Heart right ventricle (tissue), 16 donors: ENCODE measurements at regions of chr14 and their contacts with region 1.

Region 1: GRCh38 chr14:99793213-99794150 is at the start of gene EML1:
- DNase-seq: peak; percentile 83 to 88
- ATAC-seq: peak; percentile 77 to 93 (median 89)
- H3K4me3 ChIP-seq: peak within 1 kb of the TSS in 9 of 10 donors; percentile 41 to 62 (median 57)
- H3K27ac ChIP-seq: peak within 1 kb of the TSS; percentile 67 to 93 (median 87)
- H3K4me1 ChIP-seq: peaks cover 3 to 56% (median 30%) of the 10 kb centered on the region in 9 donors
- H3K27me3 ChIP-seq: peaks cover 0 to 46% (median 0%) of the 10 kb centered on the region in 7 donors
- CTCF ChIP-seq: peak in 1 of 9 donors; percentile 14
- total RNA-seq, gene EML1: 28.6 to 49.2 (median 36.3) TPM

Region 2: GRCh38 chr14:99729991-99730868 is 63.3 kb before region 1 on chr14:
- intact Hi-C with region 1: loop called in 7 of 10 experiments (anchors 2 to 10 kb)
- DNase-seq: peak; percentile 71 to 80
- ATAC-seq: peak; percentile 45 to 72 (median 60)
- H3K4me3 ChIP-seq: peak overlapping the region; percentile 37 to 66 (median 58)
- H3K27ac ChIP-seq: peak overlapping the region in 5 of 10 donors; percentile 35 to 76 (median 53)
- H3K4me1 ChIP-seq: peaks cover 12 to 57% (median 47%) of the 10 kb centered on the region in 9 donors
- H3K27me3 ChIP-seq: peaks cover 0 to 17% (median 0%) of the 10 kb centered on the region in 7 donors
- CTCF ChIP-seq: peak; percentile 86 to 97 (median 91)

Region 3: GRCh38 chr14:99755629-99756603 is 37.6 kb before region 1 on chr14:
- intact Hi-C with region 1: loop called in 4 of 10 experiments (anchors 5 kb)
- DNase-seq: peak; percentile 83 to 85
- ATAC-seq: peak; percentile 75 to 90 (median 88)
- H3K4me3 ChIP-seq: no peak overlapping the region
- H3K27ac ChIP-seq: peak overlapping the region in 6 of 10 donors; percentile 14 to 83 (median 36)
- H3K4me1 ChIP-seq: peaks cover 30 to 81% (median 64%) of the 10 kb centered on the region in 9 donors
- H3K27me3 ChIP-seq: peaks cover 0 to 4% (median 0%) of the 10 kb centered on the region in 7 donors
- CTCF ChIP-seq: no peak

Region 4: DNA sequence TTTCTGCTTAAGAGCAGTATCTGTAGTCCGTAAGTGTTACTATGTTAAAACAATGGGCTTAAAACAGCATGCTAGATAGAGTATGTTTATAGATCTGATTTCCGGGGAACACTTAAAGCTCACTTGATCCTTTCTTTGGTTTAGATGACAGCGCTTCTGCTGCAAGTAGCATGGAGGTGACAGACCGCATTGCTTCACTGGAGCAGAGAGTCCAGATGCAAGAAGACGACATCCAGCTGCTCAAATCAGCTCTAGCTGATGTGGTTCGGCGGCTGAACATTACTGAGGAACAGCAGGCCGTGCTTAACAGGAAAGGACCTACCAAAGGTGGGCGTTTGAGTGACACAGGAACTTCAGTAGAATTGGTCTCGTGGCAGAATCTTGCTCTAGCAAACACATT is 57.2 kb after region 1 on chr14:
- intact Hi-C with region 1: no loop called
- DNase-seq: no peak
- ATAC-seq: no peak
- H3K4me3 ChIP-seq: no peak overlapping the region
- H3K27ac ChIP-seq: no peak overlapping the region
- H3K4me1 ChIP-seq: peaks cover 0 to 15% (median 10%) of the 10 kb centered on the region in 9 donors
- H3K27me3 ChIP-seq: no peaks in the 10 kb centered on the region
- CTCF ChIP-seq: no peak

Region 5: DNA sequence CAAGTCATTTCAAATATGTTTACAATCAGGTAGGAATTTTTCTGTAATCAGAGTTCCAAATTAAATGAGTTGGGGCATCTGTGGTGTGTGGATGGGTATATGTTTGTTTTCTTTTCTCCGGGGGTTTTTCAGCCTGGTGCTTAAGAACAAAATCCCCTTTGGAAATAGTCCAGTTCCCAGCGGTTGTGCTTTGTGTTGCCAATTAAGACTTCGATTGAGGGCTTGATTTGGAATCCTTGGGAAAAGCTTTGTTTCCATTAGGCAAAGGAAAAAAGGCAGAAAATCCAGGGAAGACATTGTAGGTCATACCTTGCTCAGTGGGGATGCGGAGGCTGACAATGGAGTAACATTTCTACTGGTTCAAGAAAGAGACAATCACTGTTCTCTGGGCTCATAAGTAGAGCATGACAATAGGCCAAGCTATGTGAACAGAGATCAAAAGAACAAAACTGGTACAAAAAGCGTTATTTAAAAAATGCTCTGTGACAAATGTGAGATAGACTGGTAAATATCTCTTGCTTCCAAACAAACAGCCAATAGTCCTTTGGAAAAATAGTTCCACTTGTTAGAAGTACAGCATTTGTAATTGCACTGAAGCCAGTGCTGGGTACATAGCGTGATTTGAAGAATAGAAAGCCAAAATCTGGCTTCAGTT is 79.4 kb after region 1 on chr14:
- intact Hi-C with region 1: loop called in 1 of 10 experiments (anchors 5 kb)
- DNase-seq: no peak
- ATAC-seq: no peak
- H3K4me3 ChIP-seq: no peak overlapping the region
- H3K27ac ChIP-seq: no peak overlapping the region
- H3K4me1 ChIP-seq: peaks cover 0 to 45% (median 10%) of the 10 kb centered on the region in 9 donors
- H3K27me3 ChIP-seq: no peaks in the 10 kb centered on the region
- CTCF ChIP-seq: no peak